HEK293 (cell line): ENCODE measurements at regions of chr6 and their contacts with region 1.

Region 1: DNA sequence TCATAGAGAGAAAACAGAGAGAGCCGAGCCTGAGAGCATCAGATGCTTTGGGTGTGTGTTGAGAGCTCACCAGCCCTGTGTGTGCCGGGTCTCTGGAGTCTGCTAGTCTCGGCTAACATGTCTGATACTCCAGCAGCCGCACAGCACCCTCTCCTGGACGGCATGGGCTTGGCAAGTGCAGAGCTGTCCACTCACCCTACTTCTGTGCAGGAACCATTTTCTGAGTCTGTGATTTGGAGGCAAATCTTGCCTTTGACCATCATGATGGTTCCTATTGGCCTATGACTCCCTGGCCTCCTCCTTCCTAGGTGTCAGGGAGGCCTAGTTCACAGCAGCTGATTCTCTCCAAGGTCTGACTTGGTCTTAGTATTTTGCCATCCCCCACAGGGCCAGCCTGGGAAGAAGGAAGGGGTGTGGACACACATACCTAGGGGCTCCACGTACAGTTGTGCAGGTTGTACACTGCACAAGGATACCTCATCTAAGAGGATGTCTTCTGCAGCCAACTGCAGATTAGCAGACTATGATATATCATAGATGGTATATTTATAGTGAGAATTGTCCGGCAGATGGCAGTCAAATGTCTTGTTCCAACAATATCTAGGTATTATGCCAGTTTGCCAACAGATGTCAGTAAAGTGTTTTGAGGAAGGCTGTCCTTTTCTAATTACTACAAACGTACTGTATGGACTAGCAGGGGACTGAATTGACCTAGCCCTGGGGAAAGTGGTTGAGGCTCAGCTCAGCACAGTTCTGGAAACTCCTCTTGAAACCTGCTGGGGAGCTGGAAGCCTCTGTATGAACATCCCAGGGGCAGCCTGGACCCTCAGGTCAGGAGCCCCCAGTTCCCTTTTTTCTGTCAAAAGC is 13.0 kb downstream of the FGD2 start:
- H3K4me3 ChIP-seq: no peak overlapping the region
- H3K27ac ChIP-seq: no peak overlapping the region
- H3K4me1 ChIP-seq: peaks cover 3% of the 10 kb centered on the region; the same call in 1 of the 2 replicates
- CTCF ChIP-seq: peak; percentile 76

Region 2: GRCh38 chr6:36765594-36766398 is 252.6 kb before region 1 on chr6:
- CTCF ChIA-PET with region 1: interaction called, 238 read pairs
- POLR2A ChIA-PET with region 1: interaction called, 14 read pairs
- H3K4me3 ChIP-seq: no peak overlapping the region
- H3K27ac ChIP-seq: no peak overlapping the region
- H3K4me1 ChIP-seq: no peaks in the 10 kb centered on the region
- CTCF ChIP-seq: peak; percentile 85

Region 3: GRCh38 chr6:36820700-36821580 is 197.5 kb before region 1 on chr6:
- CTCF ChIA-PET with region 1: no interaction called
- POLR2A ChIA-PET with region 1: no interaction called
- H3K4me3 ChIP-seq: no peak overlapping the region
- H3K27ac ChIP-seq: peak overlapping the region; percentile 51; the same call in 1 of the 2 replicates
- H3K4me1 ChIP-seq: peaks cover 4% of the 10 kb centered on the region
- CTCF ChIP-seq: no peak

Region 4: DNA sequence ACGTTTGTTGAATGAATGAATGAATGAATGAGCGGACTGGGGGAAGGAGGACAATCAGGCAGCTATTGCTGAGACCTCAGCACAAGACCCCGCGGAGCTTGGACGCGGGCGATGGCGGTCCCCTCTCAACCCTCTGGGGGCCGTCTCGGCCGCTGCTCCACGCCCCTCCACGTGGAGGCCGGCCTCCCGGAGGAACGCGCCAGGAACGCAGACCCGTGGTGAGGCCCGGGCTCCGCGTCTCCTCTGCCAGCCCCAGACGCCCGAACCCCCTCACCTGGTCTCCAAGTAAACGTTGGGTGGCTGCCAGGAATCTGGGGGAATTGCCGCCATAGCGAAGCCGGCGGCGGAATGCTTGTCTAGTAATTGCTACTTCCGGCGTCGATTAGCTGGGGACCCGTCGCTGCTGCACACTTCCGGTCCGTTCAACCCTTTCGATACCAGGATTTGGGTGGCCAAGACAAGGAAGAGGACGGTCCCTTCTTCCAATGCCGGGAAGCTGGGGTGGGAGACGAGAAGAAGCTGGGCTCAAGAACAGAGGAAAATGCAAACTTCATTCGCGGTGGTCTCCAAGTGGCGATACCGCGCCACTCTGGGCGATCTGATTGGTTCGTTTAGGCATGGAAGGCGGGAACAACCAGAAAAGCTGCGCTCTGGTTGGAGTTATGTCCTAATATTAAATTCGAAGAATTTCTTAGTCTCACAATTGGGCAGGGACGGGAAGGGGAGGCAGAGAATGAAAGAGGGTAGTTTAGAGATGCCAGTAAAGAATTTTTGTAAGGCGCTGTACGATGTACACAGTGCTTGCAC is 143.8 kb before region 1 on chr6 and contains the start of gene PPIL1:
- CTCF ChIA-PET with region 1: interaction called, 216 read pairs
- POLR2A ChIA-PET with region 1: interaction called, 16 read pairs
- H3K4me3 ChIP-seq: peak within 1 kb of the TSS; percentile 86
- H3K27ac ChIP-seq: peak within 1 kb of the TSS; percentile 99
- H3K4me1 ChIP-seq: no peaks in the 10 kb centered on the region
- CTCF ChIP-seq: peak; percentile 74

Region 5: GRCh38 chr6:36912586-36912985 is 105.8 kb before region 1 on chr6:
- CTCF ChIA-PET with region 1: interaction called, 19 read pairs
- POLR2A ChIA-PET with region 1: no interaction called
- H3K4me3 ChIP-seq: no peak overlapping the region
- H3K27ac ChIP-seq: no peak overlapping the region
- H3K4me1 ChIP-seq: no peaks in the 10 kb centered on the region
- CTCF ChIP-seq: no peak

Region 6: GRCh38 chr6:36997811-36998722 is 20.4 kb before region 1 on chr6:
- CTCF ChIA-PET with region 1: interaction called, 31 read pairs
- POLR2A ChIA-PET with region 1: no interaction called
- H3K4me3 ChIP-seq: no peak overlapping the region
- H3K27ac ChIP-seq: no peak overlapping the region
- H3K4me1 ChIP-seq: no peaks in the 10 kb centered on the region; the same call in 1 of the 2 replicates
- CTCF ChIP-seq: no peak

Region 7: DNA sequence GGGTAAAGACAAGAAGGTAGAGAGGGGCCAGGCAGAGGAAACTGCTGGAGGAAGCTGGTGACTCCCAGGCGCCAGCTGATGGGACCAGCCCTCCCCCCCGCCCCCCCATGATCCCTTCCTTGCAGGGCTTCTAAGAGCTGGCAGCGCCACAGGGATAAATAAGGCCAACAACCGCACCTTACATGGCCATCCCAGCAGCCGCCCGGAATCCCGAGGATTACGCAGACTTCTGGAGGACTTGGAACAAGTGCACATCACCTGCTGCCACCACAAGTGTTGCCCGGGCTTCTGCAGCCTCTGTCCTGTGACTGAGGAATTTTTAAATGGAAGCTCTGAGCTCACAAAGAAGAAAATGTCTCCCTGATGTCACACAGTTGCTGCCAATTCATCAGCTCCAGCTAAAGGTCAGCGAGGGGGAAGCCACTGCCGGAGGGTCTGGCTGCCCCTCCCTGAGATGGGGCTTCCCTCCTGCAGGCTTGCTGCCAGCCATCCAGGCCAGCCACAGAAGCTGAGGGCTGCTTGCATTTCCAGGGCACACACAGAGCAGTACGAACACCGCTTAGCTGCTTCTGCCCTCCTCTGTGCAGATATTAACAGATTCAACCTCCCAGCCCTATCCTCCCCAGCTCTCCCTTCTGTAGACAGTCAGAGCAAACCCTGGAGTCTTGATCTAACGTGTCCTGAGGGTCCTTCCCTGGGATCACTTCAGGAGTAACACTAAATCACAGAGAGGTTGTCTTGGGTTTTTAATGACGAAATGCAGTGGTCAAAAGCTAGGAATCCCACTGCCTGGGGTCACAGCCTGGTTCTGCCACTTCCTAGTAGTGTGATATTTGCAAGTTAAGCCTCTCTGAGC is 112.9 kb after region 1 on chr6:
- CTCF ChIA-PET with region 1: interaction called, 11 read pairs
- POLR2A ChIA-PET with region 1: no interaction called
- H3K4me3 ChIP-seq: no peak overlapping the region
- H3K27ac ChIP-seq: no peak overlapping the region; the same call in 1 of the 2 replicates
- H3K4me1 ChIP-seq: peaks cover 17% of the 10 kb centered on the region
- CTCF ChIP-seq: no peak

Region 8: DNA sequence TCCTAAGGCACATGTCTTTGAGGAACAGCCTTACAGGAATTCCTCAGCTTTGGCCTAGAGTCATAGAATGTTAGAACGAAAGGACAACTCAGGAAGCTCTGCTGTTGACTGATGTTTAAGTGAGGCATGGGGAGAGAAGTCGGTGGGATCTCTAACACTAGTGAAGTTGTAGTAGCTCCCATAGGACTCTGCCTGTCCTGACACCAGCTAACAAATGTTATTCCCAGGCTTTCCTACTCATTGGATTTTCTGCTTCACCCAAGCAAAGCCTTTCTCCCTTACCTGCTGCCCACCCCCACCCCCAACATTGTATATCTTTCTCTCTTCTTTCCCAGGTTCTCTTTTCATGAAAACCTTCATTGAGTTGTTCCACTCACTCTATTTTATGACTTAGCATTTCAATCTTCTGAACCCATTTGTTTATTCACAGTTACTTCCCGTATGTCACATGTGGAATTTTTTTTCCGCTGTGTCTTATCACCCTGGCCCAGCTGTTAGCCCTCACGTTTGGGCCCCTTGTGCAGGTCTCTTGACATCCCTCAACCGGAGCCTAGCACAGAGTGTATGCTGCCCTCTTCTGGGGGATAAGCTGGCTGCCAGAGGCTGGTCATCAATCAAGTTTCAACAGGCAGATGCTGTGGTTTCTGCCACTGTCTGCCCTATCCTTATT is 296.2 kb after region 1 on chr6:
- CTCF ChIA-PET with region 1: interaction called, 37 read pairs
- POLR2A ChIA-PET with region 1: interaction called, 5 read pairs
- H3K4me3 ChIP-seq: no peak overlapping the region
- H3K27ac ChIP-seq: no peak overlapping the region
- H3K4me1 ChIP-seq: no peaks in the 10 kb centered on the region
- CTCF ChIP-seq: peak; percentile 52